Calu3 (cell line): ENCODE measurements at regions of chrX and their contacts with region 1.

Region 1: GRCh38 chrX:19887911-19888879 is 795 bp upstream of the SH3KBP1 start:
- DNase-seq: peak; percentile 76
- H3K4me3 Mint-ChIP-seq: peak overlapping the region; percentile 77
- H3K27ac Mint-ChIP-seq: peak overlapping the region; percentile 91
- H3K4me1 Mint-ChIP-seq: peaks cover 22% of the 10 kb centered on the region
- H3K27me3 Mint-ChIP-seq: no peaks in the 10 kb centered on the region
- CTCF ChIP-seq: peak; percentile 36

Region 2: DNA sequence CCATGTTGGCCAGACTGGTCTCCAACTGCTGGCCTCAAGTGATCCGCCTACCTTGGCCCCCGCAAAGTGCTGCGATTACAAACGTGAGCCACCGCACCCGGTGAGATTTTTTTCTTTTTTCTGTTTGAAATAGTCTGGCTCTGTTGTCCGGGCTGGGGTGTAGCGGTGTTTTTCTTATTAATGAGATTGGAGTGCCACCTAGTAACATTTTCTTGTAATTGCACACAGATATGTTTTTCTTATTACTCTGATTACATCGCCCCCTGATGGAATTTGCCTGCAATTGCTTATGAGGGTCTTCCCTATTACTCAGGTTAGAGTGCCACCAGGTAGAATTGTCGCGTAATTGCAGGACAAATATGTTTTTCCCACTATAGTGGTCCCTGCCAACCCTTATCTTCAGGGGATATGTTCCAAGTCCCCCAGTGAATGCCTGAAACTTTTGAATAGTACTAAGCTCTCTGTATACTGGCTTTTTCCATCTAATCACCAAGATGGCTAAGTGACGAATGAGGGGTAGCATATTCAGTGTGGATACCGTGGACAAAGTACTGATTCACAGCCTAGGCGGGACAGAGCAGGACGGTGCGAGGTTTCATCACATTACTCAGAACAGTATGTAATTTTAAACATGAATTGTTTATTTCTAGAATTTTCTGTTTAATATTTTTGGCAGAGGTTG is 553.1 kb before region 1 on chrX:
- CTCF ChIA-PET with region 1: no interaction called
- intact Hi-C with region 1: no loop called
- DNase-seq: no peak
- H3K4me3 Mint-ChIP-seq: no peak overlapping the region
- H3K27ac Mint-ChIP-seq: no peak overlapping the region
- H3K4me1 Mint-ChIP-seq: no peaks in the 10 kb centered on the region
- H3K27me3 Mint-ChIP-seq: peaks cover 22% of the 10 kb centered on the region
- CTCF ChIP-seq: no peak

Region 3: DNA sequence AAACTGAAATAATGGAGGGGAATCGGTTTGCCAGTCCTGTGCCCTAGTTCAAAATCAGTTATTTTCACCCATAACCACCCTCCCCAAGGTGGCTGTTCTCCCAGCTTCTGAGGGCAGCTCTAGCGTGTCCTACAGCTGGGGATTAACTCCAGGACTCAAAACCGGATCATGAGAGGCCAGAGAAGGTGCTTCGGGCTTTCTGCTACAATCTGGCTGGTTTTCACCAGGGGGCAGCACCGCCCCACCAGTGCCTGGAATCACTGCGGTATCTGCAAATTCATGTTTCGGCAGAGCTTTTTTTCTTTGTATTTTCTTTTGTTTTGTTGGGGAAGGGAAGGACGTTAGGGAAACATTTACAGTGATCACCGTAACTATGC is 516.0 kb before region 1 on chrX:
- CTCF ChIA-PET with region 1: no interaction called
- intact Hi-C with region 1: loop called (anchors 10 kb)
- DNase-seq: peak; percentile 77
- H3K4me3 Mint-ChIP-seq: peak overlapping the region; percentile 45
- H3K27ac Mint-ChIP-seq: no peak overlapping the region
- H3K4me1 Mint-ChIP-seq: peaks cover 9% of the 10 kb centered on the region
- H3K27me3 Mint-ChIP-seq: no peaks in the 10 kb centered on the region
- CTCF ChIP-seq: peak; percentile 58

Region 4: GRCh38 chrX:19593690-19594089 is 294.5 kb before region 1 on chrX:
- CTCF ChIA-PET with region 1: interaction called, 8 read pairs
- intact Hi-C with region 1: loop called (anchors 2 kb)
- DNase-seq: peak; percentile 29
- H3K4me3 Mint-ChIP-seq: no peak overlapping the region
- H3K27ac Mint-ChIP-seq: no peak overlapping the region
- H3K4me1 Mint-ChIP-seq: no peaks in the 10 kb centered on the region
- H3K27me3 Mint-ChIP-seq: no peaks in the 10 kb centered on the region
- CTCF ChIP-seq: no peak

Region 5: DNA sequence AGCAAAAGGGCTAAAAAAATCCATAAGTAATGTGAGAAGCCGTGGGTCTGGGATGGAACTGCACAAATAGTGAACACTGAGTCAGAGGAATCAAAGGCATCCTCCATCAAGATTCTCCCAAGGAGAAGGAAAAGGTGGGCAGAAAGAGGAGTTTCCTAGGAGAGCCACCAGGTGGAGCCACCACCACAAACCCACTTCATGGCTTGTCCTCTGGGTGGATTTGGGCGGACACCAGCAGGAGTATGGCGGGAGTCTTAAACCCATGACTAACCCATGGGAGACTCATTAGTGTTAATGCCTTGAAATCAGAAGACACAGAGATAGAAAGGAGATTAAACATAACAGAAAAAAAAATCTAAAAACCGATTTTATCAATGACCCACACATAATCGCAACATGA is 148.5 kb before region 1 on chrX:
- CTCF ChIA-PET with region 1: interaction called, 7 read pairs
- intact Hi-C with region 1: loop called (anchors 1 kb)
- DNase-seq: peak; percentile 76
- H3K4me3 Mint-ChIP-seq: no peak overlapping the region
- H3K27ac Mint-ChIP-seq: no peak overlapping the region
- H3K4me1 Mint-ChIP-seq: peaks cover 29% of the 10 kb centered on the region
- H3K27me3 Mint-ChIP-seq: no peaks in the 10 kb centered on the region
- CTCF ChIP-seq: peak; percentile 65

Region 6: GRCh38 chrX:19846995-19847790 is 41.0 kb before region 1 on chrX:
- CTCF ChIA-PET with region 1: no interaction called
- intact Hi-C with region 1: loop called (anchors 5 kb)
- DNase-seq: peak; percentile 41
- H3K4me3 Mint-ChIP-seq: no peak overlapping the region
- H3K27ac Mint-ChIP-seq: no peak overlapping the region
- H3K4me1 Mint-ChIP-seq: peaks cover 12% of the 10 kb centered on the region
- H3K27me3 Mint-ChIP-seq: no peaks in the 10 kb centered on the region
- CTCF ChIP-seq: no peak